ENCODE measurements at regions of chr17 and their contacts with region 1.

Region 1: GRCh38 chr17:64320613-64321553 is 57.8 kb upstream of the TEX2 start:
- DNase-seq: no peak
- H3K4me3 ChIP-seq: no peak overlapping the region
- H3K27me3 ChIP-seq: peaks cover 4% of the 10 kb centered on the region
- CTCF ChIP-seq: peak; percentile 78

Region 2: GRCh38 chr17:63741221-63742049 is 579.4 kb before region 1 on chr17 and contains the start of gene STRADA:
- CTCF ChIA-PET with region 1: no interaction called
- POLR2A ChIA-PET with region 1: no interaction called
- DNase-seq: peak; percentile 85
- H3K4me3 ChIP-seq: peak within 1 kb of the TSS; percentile 97
- H3K27me3 ChIP-seq: no peaks in the 10 kb centered on the region
- CTCF ChIP-seq: no peak
- polyA plus RNA-seq, gene STRADA: 21.0 and 30.9 TPM in 2 replicates

Region 3: GRCh38 chr17:64306850-64307463 is 13.9 kb before region 1 on chr17:
- CTCF ChIA-PET with region 1: interaction called, 22 read pairs
- POLR2A ChIA-PET with region 1: no interaction called
- DNase-seq: no peak
- H3K4me3 ChIP-seq: no peak overlapping the region
- H3K27me3 ChIP-seq: 0 out of 2 replicates have a peak, but pooled peaks cover 1% of the 10 kb centered on the region
- CTCF ChIP-seq: peak; percentile 83

Region 4: GRCh38 chr17:64331946-64332493 is 11.1 kb after region 1 on chr17:
- CTCF ChIA-PET with region 1: interaction called, 13 read pairs
- POLR2A ChIA-PET with region 1: interaction called, 3 read pairs
- DNase-seq: no peak
- H3K4me3 ChIP-seq: no peak overlapping the region
- H3K27me3 ChIP-seq: peaks cover 2% of the 10 kb centered on the region
- CTCF ChIP-seq: no peak

Region 5: DNA sequence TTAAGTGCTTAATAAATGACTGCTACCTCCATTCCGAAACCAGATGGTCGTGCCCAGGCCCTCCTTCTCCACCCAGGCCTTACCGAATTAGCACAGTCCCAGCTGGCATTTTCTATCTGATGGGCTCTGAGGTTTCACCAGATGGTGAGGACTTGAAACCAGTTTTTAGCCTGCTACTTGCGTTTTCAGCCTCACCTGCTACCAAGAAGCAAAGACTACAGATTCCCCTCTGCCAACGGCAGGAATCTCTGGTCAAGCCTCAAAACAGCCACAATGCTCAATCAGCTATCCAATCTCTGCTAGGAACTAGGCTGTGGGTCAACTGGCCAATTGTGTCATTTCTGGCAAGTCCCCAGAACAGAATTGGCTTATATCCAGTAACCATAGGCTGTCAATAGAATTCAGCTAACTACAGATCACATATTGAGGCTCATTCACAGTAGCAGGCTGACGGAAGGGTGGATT is 58.0 kb after region 1 on chr17:
- CTCF ChIA-PET with region 1: interaction called, 11 read pairs
- POLR2A ChIA-PET with region 1: no interaction called
- DNase-seq: no peak
- H3K4me3 ChIP-seq: no peak overlapping the region
- H3K27me3 ChIP-seq: peaks cover 19% of the 10 kb centered on the region
- CTCF ChIP-seq: no peak

Region 6: DNA sequence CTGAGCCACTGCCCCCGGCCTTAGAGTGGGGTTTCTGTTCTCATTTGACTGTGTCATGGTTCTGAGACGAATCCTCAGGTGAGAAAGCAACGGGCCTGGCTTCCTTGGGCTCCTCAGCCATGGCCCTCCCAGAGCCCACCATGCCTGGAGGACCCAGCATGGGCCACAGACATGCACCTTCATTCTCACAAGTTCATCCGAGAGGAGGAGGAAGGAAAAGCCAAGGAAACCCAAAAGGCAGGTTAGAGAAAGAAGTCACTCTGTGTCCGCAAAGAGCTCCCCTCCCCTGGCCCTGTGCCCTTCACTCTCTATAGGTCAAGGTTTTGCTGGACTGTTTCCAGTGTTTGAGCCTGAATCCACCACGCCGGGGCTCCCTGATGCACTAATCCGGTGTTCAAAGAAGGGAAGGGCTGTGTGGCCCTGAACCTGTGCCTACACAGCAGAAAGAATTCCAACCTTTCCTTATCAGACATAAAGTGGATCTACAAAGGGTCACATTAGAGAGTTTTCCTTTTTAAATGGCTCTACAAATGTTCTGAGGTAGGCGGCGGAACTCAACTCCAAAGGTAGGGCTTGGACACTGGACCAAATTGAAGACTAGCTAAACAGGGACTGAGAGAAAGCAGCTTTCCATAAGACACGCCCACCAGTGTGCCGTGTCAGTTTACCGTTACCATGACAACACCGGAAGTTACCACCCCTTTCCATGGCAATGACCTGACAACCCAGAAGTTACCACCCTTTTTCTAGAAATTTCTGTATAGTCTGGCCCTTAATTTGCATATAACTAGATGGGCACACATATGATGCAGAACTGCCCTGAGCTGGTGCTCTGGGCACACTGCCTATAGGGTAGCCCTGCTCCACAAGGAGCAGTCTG is 85.7 kb after region 1 on chr17:
- CTCF ChIA-PET with region 1: interaction called, 481 read pairs
- POLR2A ChIA-PET with region 1: no interaction called
- DNase-seq: no peak
- H3K4me3 ChIP-seq: no peak overlapping the region
- H3K27me3 ChIP-seq: no peaks in the 10 kb centered on the region; the same call in 1 of the 2 replicates
- CTCF ChIP-seq: no peak

Region 7: GRCh38 chr17:64484380-64484779 is 163.5 kb after region 1 on chr17:
- CTCF ChIA-PET with region 1: no interaction called
- POLR2A ChIA-PET with region 1: no interaction called
- DNase-seq: no peak
- H3K4me3 ChIP-seq: no peak overlapping the region
- H3K27me3 ChIP-seq: no peaks in the 10 kb centered on the region
- CTCF ChIP-seq: no peak

Measured in BJ (cell line).